Activated CD4-positive, alpha-beta T cell treated with anti-CD3 and anti-CD28 coated beads for 36 hours (primary cell): ENCODE measurements at regions of chr16 and their contacts with region 1.

Region 1: DNA sequence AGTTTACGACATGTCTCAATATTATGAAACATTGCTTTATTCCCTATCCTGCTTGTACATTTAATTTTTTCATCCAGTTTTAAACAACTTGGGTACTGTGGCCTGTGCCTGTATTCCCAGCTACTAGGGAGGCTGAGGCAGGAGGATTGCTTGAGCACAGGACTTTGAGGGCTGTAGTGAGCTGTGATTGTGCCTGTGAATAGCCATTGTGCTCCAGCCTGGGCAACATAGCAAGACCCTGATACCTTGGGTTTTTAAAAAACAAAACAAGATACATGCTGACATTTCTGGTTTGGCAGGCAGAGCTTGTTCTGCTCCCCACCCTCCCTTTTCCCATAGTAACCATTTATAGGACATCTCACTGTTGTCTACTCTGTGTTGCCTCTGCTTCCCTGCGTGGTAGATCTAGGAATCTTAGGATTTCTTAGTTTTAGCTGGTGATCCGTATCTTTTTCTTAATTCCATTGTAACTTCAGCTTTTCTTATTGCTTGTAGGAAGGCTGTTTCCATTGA is 35.6 kb downstream of the TENT4B start:
- DNase-seq: no peak
- ATAC-seq: no peak
- H3K4me3 Mint-ChIP-seq: no peak overlapping the region
- H3K27ac Mint-ChIP-seq: no peak overlapping the region
- H3K4me1 Mint-ChIP-seq: peaks cover 46% of the 10 kb centered on the region
- H3K27me3 Mint-ChIP-seq: no peaks in the 10 kb centered on the region

Region 2: DNA sequence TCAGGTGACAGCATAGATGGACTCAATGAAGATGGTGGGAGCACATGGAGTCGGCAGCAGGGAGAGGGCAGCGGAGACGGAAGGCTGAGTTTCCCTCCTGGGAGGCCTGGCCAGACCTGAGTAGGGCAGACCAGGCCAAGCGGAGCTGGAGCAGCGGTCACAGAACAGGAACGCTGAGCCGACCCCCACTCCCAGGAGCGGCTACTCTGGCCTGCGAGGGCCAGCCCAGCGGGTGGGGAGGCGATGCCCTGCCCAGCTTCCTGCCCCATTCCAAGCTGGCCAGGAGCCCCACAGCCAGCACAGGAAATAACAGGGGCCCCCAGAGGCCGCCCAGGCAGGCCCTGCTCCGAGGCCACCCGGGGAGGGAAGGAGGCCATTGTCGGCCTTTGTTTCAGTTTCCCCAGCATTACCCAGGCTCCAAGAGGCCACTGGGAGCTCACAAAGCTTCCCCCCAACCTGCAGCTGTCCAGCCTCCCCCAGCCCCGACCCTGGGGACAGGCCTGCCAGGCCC is 412.5 kb before region 1 on chr16:
- CTCF ChIA-PET with region 1: no interaction called
- POLR2A ChIA-PET with region 1: no interaction called
- intact Hi-C with region 1: no loop called
- DNase-seq: no peak
- ATAC-seq: no peak
- H3K4me3 Mint-ChIP-seq: no peak overlapping the region
- H3K27ac Mint-ChIP-seq: no peak overlapping the region
- H3K4me1 Mint-ChIP-seq: no peaks in the 10 kb centered on the region
- H3K27me3 Mint-ChIP-seq: no peaks in the 10 kb centered on the region

Region 3: DNA sequence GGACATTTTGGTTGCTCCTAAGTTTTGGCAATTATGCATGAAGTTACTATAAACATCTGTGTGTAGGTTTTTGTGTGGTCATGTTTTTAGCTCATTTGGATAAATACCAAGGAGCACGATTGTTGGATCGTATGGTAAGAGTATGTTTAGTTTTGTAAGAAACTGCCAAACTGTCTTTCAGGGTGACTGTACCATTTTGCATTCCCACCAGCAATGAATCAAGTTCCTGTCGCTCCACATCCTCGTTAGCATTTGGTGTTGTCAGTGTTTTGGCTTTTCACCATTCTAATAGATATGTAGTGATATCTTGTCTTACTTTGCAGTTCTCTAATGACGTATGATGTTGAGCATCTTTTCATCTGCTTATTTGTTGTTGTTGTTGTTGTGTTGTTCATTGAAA is 15.4 kb before region 1 on chr16:
- CTCF ChIA-PET with region 1: no interaction called
- POLR2A ChIA-PET with region 1: no interaction called
- intact Hi-C with region 1: no loop called
- DNase-seq: no peak
- ATAC-seq: peak; percentile 45
- H3K4me3 Mint-ChIP-seq: no peak overlapping the region
- H3K27ac Mint-ChIP-seq: peak overlapping the region; percentile 59
- H3K4me1 Mint-ChIP-seq: peaks cover 72% of the 10 kb centered on the region
- H3K27me3 Mint-ChIP-seq: no peaks in the 10 kb centered on the region

Region 4: GRCh38 chr16:50202926-50203624 is 14.4 kb after region 1 on chr16:
- CTCF ChIA-PET with region 1: interaction called, 10 read pairs
- POLR2A ChIA-PET with region 1: no interaction called
- intact Hi-C with region 1: no loop called
- DNase-seq: no peak
- ATAC-seq: no peak
- H3K4me3 Mint-ChIP-seq: no peak overlapping the region
- H3K27ac Mint-ChIP-seq: no peak overlapping the region
- H3K4me1 Mint-ChIP-seq: peaks cover 57% of the 10 kb centered on the region
- H3K27me3 Mint-ChIP-seq: no peaks in the 10 kb centered on the region

Region 5: DNA sequence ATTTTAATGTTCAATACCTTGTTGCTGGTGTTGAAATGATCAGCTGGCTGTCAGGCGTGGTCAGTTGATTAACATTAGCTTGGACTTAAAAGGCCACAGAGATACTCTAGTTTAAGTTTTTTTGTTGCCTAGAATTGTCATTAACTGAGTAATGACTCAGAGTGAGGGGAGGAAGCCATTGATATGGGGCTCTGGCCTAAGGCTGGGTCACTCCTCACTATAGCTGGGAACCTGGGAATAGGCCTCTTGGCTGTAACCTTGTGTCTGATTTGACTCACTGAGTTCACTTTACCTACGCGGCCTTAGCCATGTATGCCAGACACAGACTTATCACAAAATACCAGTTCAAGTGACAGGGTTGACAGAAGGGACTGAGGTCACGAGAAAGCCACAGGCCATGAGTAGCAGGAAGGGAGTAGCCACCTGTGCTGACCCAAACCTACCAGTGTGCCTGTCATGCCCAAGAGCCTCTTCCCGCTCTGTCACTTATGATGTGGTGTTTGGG is 39.7 kb after region 1 on chr16:
- CTCF ChIA-PET with region 1: no interaction called
- POLR2A ChIA-PET with region 1: no interaction called
- intact Hi-C with region 1: no loop called
- DNase-seq: no peak
- ATAC-seq: no peak
- H3K4me3 Mint-ChIP-seq: no peak overlapping the region
- H3K27ac Mint-ChIP-seq: no peak overlapping the region
- H3K4me1 Mint-ChIP-seq: no peaks in the 10 kb centered on the region
- H3K27me3 Mint-ChIP-seq: no peaks in the 10 kb centered on the region

Region 6: DNA sequence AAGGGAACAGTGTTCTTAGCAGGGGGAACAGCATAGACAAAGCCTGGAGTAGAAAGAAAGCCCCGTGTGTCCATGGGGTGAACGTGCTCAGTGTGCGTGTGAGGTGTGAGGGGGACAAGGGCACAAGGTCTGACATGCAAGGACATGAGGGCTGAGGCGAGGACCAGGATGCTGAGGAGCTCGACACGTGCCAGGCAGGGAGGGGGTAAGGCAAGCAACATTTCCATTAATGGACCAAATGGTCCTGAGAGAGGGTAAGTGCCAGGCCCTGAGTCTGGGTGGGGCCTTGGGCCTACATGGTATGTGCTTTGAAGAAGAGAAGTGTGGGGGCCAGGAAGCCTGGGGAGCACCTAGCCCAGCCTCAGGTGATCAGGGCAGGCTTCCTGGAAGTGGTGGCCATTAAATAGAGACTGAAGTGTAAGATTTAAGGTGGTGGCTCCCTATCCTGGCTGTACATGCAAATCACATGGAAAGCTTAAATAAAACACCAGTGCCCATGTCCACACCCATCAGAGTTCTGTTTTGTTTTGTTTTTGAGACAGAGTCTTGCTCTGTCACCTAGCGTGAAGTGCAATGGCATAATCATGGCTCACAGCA is 107.0 kb after region 1 on chr16:
- CTCF ChIA-PET with region 1: no interaction called
- POLR2A ChIA-PET with region 1: no interaction called
- intact Hi-C with region 1: no loop called
- DNase-seq: no peak
- ATAC-seq: no peak
- H3K4me3 Mint-ChIP-seq: no peak overlapping the region
- H3K27ac Mint-ChIP-seq: no peak overlapping the region
- H3K4me1 Mint-ChIP-seq: no peaks in the 10 kb centered on the region
- H3K27me3 Mint-ChIP-seq: no peaks in the 10 kb centered on the region